ENCODE measurements at regions of chr12 and their contacts with region 1.

Region 1: DNA sequence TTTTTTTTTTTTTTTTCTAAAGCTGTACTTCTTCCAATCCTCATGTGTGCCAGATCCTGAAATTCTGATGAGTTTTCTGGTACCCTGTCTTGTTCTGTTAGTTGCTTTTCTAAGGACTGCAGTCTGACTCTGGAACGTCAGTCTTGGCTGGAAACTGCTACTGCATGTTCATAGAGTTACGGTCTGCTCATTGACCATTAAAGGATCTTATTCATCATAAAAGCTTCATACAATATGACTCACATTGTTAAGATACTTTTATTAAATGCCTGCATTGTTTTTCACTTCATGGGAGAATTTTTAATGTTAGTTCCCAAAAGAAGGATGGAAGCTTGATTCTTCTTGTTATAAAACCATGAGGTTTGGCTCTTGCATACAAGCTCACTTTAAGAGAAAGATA is 233.6 kb downstream of the SYT10 start:
- DNase-seq: no peak
- H3K4me3 ChIP-seq: no peak overlapping the region
- H3K27ac ChIP-seq: no peak overlapping the region
- H3K4me1 ChIP-seq: no peaks in the 10 kb centered on the region
- H3K27me3 ChIP-seq: no peaks in the 10 kb centered on the region
- CTCF ChIP-seq: no peak
- POLR2A ChIP-seq: no peak

Region 2: GRCh38 chr12:31482816-31483215 is 1723.2 kb before region 1 on chr12:
- intact Hi-C with region 1: no loop called
- DNase-seq: no peak
- H3K4me3 ChIP-seq: no peak overlapping the region
- H3K27ac ChIP-seq: no peak overlapping the region
- H3K4me1 ChIP-seq: no peaks in the 10 kb centered on the region
- H3K27me3 ChIP-seq: no peaks in the 10 kb centered on the region
- CTCF ChIP-seq: no peak
- POLR2A ChIP-seq: no peak

Region 3: DNA sequence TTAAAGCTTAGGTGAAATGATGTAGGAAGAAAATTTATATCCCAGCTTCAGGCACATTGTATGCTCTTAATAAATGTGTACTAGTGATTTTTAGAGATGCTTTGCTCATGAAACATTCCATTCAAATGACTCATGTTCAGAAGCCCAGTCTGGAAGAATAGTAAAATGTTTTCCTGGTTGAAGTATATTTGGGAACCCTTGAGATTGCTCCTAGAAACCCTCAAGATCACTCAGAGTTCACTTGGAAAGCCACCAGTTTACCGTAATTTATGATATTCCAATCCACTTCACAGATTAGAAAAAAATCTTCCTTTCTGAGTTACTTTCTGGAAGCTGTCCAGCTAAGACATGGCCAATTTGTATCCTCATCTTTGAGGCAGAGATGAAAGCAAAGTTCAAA is 47.2 kb after region 1 on chr12:
- intact Hi-C with region 1: loop called (anchors 5 kb)
- DNase-seq: no peak
- H3K4me3 ChIP-seq: no peak overlapping the region
- H3K27ac ChIP-seq: no peak overlapping the region
- H3K4me1 ChIP-seq: no peaks in the 10 kb centered on the region
- H3K27me3 ChIP-seq: no peaks in the 10 kb centered on the region
- CTCF ChIP-seq: no peak
- POLR2A ChIP-seq: no peak